Activated CD4-positive, alpha-beta memory T cell treated with anti-CD3 and anti-CD28 coated beads for 36 hours (primary cell): ENCODE measurements at regions of chr9 and their contacts with region 1.

Region 1: DNA sequence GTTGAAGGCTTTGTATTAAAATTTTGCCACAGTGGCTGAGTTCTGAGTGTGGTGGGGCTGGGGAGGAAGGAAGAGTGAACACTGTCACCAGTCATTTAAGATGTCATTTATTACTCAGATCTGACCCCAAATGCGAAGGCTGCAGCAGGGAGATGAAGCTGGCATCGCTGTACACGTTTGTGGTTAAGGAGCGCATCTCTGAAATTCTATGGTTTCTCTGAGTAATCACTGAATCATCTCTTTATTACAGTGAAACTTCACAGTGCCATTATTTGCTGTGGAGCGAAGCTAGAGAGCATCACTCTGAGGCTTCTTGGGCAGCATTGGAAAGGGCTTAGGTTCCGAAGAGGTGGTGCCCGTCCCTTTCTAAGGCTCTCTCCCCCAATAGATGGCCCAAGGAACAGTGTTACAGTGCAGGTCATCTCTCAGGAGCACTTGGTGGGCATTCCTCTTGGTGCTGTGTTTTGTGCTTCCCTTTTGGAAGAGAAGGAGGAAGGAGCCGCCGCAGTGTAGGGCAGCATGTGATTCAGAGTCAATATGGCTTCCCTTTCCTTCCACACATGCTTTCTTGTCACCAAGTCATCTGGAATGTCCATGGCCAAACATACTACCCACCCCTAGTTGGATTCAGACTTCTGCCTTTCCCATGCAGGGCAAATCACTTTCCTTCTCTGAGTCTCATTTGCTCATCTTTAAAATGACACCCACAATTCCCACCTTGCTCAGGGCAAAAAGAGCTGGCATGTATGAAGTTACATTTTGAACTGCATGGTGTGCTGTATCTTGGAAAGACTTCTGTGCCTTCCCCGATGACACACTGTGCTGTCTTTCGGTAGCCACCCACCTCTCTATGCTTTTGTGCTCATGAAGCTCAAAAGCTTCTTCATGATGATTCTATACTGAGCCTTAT is 9.3 kb upstream of the TEX48 start:
- DNase-seq: peak; percentile 88
- H3K4me3 Mint-ChIP-seq: peak overlapping the region; percentile 55
- H3K27ac Mint-ChIP-seq: peak overlapping the region; percentile 99
- H3K4me1 Mint-ChIP-seq: peaks cover 87% of the 10 kb centered on the region
- H3K27me3 Mint-ChIP-seq: no peaks in the 10 kb centered on the region

Region 2: GRCh38 chr9:113548221-113549041 is 1142.9 kb before region 1 on chr9:
- CTCF ChIA-PET with region 1: no interaction called
- POLR2A ChIA-PET with region 1: no interaction called
- intact Hi-C with region 1: no loop called
- DNase-seq: peak; percentile 53
- H3K4me3 Mint-ChIP-seq: no peak overlapping the region
- H3K27ac Mint-ChIP-seq: peak overlapping the region; percentile 75
- H3K4me1 Mint-ChIP-seq: peaks cover 26% of the 10 kb centered on the region
- H3K27me3 Mint-ChIP-seq: no peaks in the 10 kb centered on the region

Region 3: GRCh38 chr9:114718801-114719221 is 27.5 kb after region 1 on chr9:
- CTCF ChIA-PET with region 1: interaction called, 7 read pairs
- POLR2A ChIA-PET with region 1: interaction called, 57 read pairs
- intact Hi-C with region 1: loop called (anchors 1 kb)
- DNase-seq: peak; percentile 97
- H3K4me3 Mint-ChIP-seq: peak overlapping the region; percentile 17
- H3K27ac Mint-ChIP-seq: peak overlapping the region; percentile 80
- H3K4me1 Mint-ChIP-seq: peaks cover 63% of the 10 kb centered on the region
- H3K27me3 Mint-ChIP-seq: no peaks in the 10 kb centered on the region

Region 4: DNA sequence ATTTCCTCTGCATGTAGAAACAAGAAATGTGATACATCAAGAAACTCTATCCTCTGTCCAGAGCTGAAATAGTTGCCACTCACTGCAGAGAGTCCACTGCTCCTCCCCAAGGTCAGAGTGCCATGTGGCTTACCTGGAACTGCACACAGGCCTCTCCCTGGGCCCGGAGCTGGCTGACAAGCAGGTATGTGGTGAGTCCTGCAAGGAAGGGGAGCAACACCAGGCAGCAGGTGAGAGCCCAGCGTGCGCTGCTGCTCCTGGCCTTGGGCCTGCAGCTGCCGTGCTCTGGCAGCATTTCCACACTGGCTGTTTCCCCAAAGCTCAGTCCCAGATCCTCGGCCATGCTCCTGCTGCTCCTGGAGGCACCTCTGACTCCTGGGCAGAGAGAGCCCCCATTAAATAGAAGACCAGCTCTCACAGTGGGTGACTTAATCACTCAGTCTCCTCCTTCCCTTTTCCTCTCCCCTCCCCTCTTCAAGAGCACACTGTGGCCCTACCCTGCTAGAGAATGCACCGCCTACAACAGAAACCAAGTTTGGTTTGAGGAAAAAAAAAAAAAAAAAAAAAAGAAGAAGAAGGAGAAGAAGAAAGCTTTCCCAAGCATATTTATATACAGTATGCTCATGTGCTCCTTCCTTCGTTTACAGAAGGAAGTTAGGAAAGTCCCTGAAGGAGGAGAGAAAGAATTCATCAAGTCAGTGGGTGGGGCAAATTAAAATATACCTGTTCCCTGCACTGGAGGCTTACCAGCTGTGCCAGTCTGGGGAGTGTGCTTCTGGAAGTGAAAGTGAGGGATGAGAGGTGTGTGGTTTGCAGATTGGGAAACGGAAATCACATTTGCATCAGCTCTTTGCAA is 114.6 kb after region 1 on chr9 and contains the start of gene TNFSF15:
- CTCF ChIA-PET with region 1: no interaction called
- POLR2A ChIA-PET with region 1: no interaction called
- intact Hi-C with region 1: loop called (anchors 2 kb)
- DNase-seq: peak; percentile 67
- H3K4me3 Mint-ChIP-seq: peak within 1 kb of the TSS; percentile 30
- H3K27ac Mint-ChIP-seq: no peak within 1 kb of the TSS
- H3K4me1 Mint-ChIP-seq: peaks cover 24% of the 10 kb centered on the region
- H3K27me3 Mint-ChIP-seq: no peaks in the 10 kb centered on the region
- total RNA-seq, gene TNFSF15: 0.12 to 0.14 TPM

Region 5: DNA sequence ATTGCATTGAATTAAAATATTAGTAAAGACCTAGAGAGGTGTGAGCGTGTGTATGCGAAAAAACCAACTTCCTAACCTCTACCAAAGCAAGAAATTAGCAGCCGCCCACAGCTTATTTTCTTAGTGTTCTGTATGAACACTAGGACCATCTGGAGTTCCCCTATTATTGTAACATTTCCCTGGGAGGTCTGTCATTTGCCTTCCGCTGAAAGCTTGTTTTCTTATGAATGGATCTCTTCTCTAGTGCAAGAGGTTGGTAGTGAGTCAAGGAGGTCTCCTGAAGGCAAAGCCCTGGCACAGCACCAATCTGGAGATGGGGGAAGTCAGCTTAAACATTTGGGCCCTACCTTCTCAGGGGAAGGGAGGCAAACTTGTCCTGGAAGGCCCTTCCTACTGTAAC is 228.3 kb after region 1 on chr9:
- CTCF ChIA-PET with region 1: no interaction called
- POLR2A ChIA-PET with region 1: interaction called, 15 read pairs
- intact Hi-C with region 1: no loop called
- DNase-seq: peak; percentile 68
- H3K4me3 Mint-ChIP-seq: peak overlapping the region; percentile 10
- H3K27ac Mint-ChIP-seq: peak overlapping the region; percentile 76
- H3K4me1 Mint-ChIP-seq: peaks cover 93% of the 10 kb centered on the region
- H3K27me3 Mint-ChIP-seq: no peaks in the 10 kb centered on the region

Region 6: DNA sequence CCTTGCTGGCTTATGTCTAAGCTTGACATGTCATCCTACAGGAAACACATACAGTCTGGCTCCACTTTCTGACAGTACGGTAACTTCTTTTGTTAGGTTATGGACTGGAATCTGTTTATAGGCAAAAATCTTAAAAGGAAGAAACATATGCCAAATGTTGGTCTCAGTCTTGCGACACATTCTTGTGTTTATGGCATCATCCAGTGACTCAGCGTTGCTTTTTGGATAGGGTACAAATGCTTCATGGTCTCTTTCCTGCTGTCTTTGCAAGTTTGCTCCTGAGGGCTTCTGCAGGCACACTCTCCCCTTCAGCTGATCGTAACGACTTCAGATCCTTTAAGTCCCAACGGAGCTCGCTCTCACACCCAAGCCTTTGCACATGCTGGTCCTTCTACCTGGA is 262.6 kb after region 1 on chr9:
- CTCF ChIA-PET with region 1: no interaction called
- POLR2A ChIA-PET with region 1: interaction called, 4 read pairs
- intact Hi-C with region 1: loop called (anchors 1 kb)
- DNase-seq: peak; percentile 48
- H3K4me3 Mint-ChIP-seq: no peak overlapping the region
- H3K27ac Mint-ChIP-seq: no peak overlapping the region
- H3K4me1 Mint-ChIP-seq: peaks cover 35% of the 10 kb centered on the region
- H3K27me3 Mint-ChIP-seq: no peaks in the 10 kb centered on the region